CD8-positive, alpha-beta memory T cell (primary cell): ENCODE measurements at regions of chr22 and their contacts with region 1.

Region 1: DNA sequence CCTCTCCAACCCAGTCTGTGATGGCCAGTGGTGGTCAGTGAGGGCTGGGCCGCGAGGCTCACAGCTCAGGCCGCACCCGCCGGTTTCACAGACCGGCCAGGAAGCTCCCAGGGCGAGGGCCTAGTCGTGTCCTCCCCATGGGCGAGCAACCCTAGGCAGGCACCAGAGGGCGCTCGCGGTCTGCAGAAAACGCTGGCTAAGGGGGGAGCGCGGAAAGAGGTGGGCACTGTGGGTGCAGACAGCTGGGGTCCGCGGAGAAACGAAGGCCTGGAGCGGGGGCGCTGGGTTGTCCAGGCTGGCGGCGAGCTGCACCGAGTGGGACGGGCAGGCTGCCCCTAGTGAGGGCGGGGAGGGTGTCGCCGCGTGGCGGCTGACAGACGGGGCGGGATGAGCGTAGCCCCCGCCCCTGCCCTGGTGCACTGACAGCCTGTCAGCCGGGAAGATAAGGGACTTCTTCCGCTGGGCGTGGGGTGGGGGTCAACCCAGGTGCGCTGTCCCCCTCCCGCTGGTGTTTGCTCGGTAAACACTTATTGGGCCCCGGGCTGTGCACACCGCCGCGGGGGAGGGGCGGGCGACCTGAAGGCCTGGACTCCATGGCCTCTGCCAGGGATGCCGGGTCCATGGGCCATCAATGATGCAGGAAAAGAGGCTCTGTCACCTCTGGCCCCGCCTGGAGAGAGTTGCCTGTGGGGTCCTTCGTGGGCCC is 7.5 kb downstream of the GP1BB start:
- DNase-seq: peak; percentile 71 to 88 (median 81)
- H3K4me3 ChIP-seq: peak overlapping the region; percentile 63
- H3K4me3 Mint-ChIP-seq: peak overlapping the region; percentile 63 to 81 (median 80)
- H3K27ac ChIP-seq: peak overlapping the region; percentile 38
- H3K27ac Mint-ChIP-seq: peak overlapping the region in 1 of 8 donors; percentile 57
- H3K4me1 ChIP-seq: peaks cover 9% of the 10 kb centered on the region
- H3K4me1 Mint-ChIP-seq: peaks cover 0 to 4% (median 2%) of the 10 kb centered on the region in 3 donors
- H3K27me3 ChIP-seq: no peaks in the 10 kb centered on the region
- H3K27me3 Mint-ChIP-seq: peaks cover 4 to 5% of the 10 kb centered on the region in 2 donors

Region 2: DNA sequence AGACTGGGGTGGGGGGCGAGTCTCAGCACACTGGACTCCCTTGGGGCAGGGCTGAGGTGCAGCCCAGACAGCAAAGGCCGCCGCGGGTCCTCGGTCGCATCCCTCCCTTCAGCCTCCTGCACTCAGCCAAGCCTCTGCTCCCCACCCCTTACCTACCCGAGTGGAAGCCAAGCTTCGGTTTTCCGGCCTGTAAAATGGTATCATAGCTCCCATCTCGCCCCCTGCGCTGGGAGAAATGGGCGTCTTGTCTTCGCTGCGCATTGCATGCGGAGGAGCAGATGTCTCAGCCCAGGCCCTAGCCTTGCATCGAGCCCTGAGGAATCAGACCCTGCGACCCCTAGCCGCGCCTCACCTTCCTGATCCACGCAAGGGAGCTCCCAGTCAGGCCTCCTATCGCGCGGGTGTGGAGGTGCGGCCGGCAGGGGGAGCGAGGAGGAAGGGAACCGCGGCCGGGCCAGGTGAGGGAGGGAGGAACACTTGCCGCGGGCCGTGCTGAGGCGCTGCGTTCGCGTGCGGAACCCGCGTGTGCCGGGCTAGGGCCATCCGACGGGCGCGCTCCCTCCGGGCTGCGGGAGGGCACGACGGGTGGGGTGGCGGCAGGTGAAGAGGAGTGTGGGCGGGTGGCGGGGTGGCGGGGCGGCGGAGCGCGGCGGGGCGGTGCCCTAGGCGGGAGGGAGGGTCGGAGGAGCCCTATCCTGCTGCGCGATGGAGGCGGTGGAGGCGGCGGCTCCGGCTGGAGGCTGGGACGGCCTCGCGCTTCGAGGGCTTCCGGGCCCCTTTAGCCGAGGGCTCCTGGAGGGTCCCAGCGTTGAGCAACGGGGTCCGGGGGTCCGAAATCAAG is 25.7 kb after region 1 on chr22:
- CTCF ChIA-PET with region 1: interaction called, 13 read pairs
- POLR2A ChIA-PET with region 1: no interaction called
- DNase-seq: peak; percentile 38 to 74 (median 47)
- H3K4me3 ChIP-seq: peak overlapping the region; percentile 37
- H3K4me3 Mint-ChIP-seq: peak overlapping the region; percentile 52 to 81 (median 68)
- H3K27ac ChIP-seq: no peak overlapping the region
- H3K27ac Mint-ChIP-seq: no peak overlapping the region
- H3K4me1 ChIP-seq: peaks cover 30% of the 10 kb centered on the region
- H3K4me1 Mint-ChIP-seq: peaks cover 25 to 37% (median 27%) of the 10 kb centered on the region in 3 donors
- H3K27me3 ChIP-seq: peaks cover 62% of the 10 kb centered on the region
- H3K27me3 Mint-ChIP-seq: peaks cover 34 to 57% of the 10 kb centered on the region in 2 donors

Region 3: GRCh38 chr22:19799322-19800190 is 68.7 kb after region 1 on chr22:
- CTCF ChIA-PET with region 1: no interaction called
- POLR2A ChIA-PET with region 1: no interaction called
- DNase-seq: no peak
- H3K4me3 ChIP-seq: no peak overlapping the region
- H3K4me3 Mint-ChIP-seq: no peak overlapping the region
- H3K27ac ChIP-seq: no peak overlapping the region
- H3K27ac Mint-ChIP-seq: peak overlapping the region in 1 of 8 donors; percentile 47
- H3K4me1 ChIP-seq: no peaks in the 10 kb centered on the region
- H3K4me1 Mint-ChIP-seq: no peaks in the 10 kb centered on the region
- H3K27me3 ChIP-seq: no peaks in the 10 kb centered on the region
- H3K27me3 Mint-ChIP-seq: no peaks in the 10 kb centered on the region

Region 4: GRCh38 chr22:19903031-19903430 is 172.2 kb after region 1 on chr22:
- CTCF ChIA-PET with region 1: interaction called, 35 read pairs
- POLR2A ChIA-PET with region 1: no interaction called
- DNase-seq: no peak
- H3K4me3 ChIP-seq: no peak overlapping the region
- H3K4me3 Mint-ChIP-seq: no peak overlapping the region
- H3K27ac ChIP-seq: no peak overlapping the region
- H3K27ac Mint-ChIP-seq: no peak overlapping the region
- H3K4me1 ChIP-seq: no peaks in the 10 kb centered on the region
- H3K4me1 Mint-ChIP-seq: no peaks in the 10 kb centered on the region
- H3K27me3 ChIP-seq: no peaks in the 10 kb centered on the region
- H3K27me3 Mint-ChIP-seq: no peaks in the 10 kb centered on the region

Region 5: DNA sequence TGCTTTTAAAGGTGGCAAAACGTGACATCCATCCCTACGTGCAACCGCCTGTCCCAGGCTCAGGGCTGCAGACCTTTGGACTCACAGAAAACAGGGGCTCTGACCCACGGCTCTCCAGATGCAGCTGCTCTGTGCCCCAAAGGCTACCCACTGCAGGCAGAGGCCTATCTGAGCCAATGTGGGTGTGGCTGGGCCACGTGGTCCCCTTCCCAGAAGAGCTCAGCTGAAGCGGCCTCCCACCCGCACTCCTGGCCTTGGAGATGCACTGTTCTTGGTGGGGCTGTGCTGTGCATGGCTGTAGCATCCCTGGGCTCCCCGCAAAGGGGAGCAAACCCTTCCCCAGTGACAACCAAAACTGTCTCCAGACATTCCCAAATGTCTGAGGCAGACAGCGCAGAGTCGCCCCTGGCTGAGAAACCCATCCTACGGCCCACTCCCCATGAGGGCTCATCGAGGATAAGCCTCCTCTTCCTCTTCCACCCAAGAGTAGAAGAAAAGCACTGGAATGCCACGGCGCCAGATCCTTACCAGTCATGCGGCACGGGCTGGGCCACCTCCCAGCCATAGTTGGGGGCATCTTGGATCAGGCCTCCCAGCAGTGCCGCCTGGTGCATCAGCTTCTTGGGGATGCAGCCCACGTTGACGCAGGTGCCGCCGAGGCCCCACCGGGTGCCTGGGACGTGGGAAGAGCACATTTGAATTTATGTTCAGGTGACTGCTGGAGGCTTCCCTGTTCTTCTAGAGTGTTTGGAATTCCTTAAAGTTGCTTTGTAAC is 187.7 kb after region 1 on chr22:
- CTCF ChIA-PET with region 1: interaction called, 111 read pairs
- POLR2A ChIA-PET with region 1: no interaction called
- DNase-seq: no peak
- H3K4me3 ChIP-seq: no peak overlapping the region
- H3K4me3 Mint-ChIP-seq: no peak overlapping the region
- H3K27ac ChIP-seq: no peak overlapping the region
- H3K27ac Mint-ChIP-seq: no peak overlapping the region
- H3K4me1 ChIP-seq: no peaks in the 10 kb centered on the region
- H3K4me1 Mint-ChIP-seq: no peaks in the 10 kb centered on the region
- H3K27me3 ChIP-seq: no peaks in the 10 kb centered on the region
- H3K27me3 Mint-ChIP-seq: no peaks in the 10 kb centered on the region